ENCODE measurements at regions of chr10 and their contacts with region 1.

Region 1: GRCh38 chr10:102461187-102462054 is 10.1 kb upstream of the C10orf95 start:
- DNase-seq: peak; percentile 91
- H3K4me3 Mint-ChIP-seq: peak overlapping the region; percentile 94
- H3K27ac Mint-ChIP-seq: peak overlapping the region; percentile 87
- H3K4me1 Mint-ChIP-seq: peaks cover 26% of the 10 kb centered on the region
- H3K27me3 Mint-ChIP-seq: peaks cover 1% of the 10 kb centered on the region

Region 2: GRCh38 chr10:102432162-102432950 is 29.1 kb before region 1 on chr10 and contains the start of gene CUEDC2:
- intact Hi-C with region 1: loop called (anchors 1 kb)
- DNase-seq: peak; percentile 95
- H3K4me3 Mint-ChIP-seq: peak within 1 kb of the TSS; percentile 95
- H3K27ac Mint-ChIP-seq: peak within 1 kb of the TSS; percentile 94
- H3K4me1 Mint-ChIP-seq: peaks cover 55% of the 10 kb centered on the region
- H3K27me3 Mint-ChIP-seq: no peaks in the 10 kb centered on the region
- total RNA-seq, gene CUEDC2: 59.0 and 59.4 TPM in 2 replicates

Measured in activated T-helper 1 cell treated with anti-CD3 and anti-CD28 coated beads, Interleukin-12 subunit alpha, Interleukin-12 subunit beta, Interleukin-2, Interleukin-4 antibody, amounts not matched to agents 30 ng/mL and 10 ng/mL and 1 ng/mL, durations not matched to agents 14 hours and 24 hours and 36 hours (primary cell).